PC-3 (cell line): ENCODE measurements at regions of chr9 and their contacts with region 1.

Region 1: GRCh38 chr9:127586537-127586936 is 25.5 kb upstream of the STXBP1 start:
- DNase-seq: peak; percentile 80
- ATAC-seq: peak; percentile 64
- H3K4me3 ChIP-seq: no peak overlapping the region
- H3K27ac ChIP-seq: no peak overlapping the region
- H3K4me1 ChIP-seq: peaks cover 11% of the 10 kb centered on the region
- H3K27me3 ChIP-seq: no peaks in the 10 kb centered on the region
- CTCF ChIP-seq: peak; percentile 79

Region 2: DNA sequence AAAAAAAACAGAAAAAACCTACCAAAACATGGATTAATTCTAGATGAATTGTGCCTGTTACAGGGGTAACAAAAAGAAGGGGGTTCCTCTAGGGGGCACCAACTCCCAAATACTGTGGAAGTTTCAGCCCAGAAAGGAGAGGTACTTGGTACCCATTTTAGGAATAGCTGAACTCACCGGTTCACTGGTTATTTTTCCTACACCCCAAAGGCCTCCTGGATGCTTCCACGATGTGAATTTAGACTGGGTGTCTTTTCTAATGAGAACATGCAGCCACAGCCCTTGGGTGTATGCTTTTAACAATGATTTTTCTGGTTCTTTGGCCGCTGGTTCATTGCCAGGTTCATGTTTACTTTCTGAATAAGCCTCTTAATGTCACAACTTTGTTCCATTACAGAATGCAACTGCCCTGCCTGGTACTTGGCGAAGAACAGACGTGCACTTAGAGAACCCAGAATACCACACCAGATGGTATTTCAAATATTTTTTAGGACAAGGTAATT is 275.2 kb before region 1 on chr9:
- CTCF ChIA-PET with region 1: no interaction called
- POLR2A ChIA-PET with region 1: no interaction called
- intact Hi-C with region 1: no loop called
- DNase-seq: peak; percentile 86
- ATAC-seq: peak; percentile 87
- H3K4me3 ChIP-seq: 0 out of 2 replicates have a peak overlapping the region, but pooled peaks have one; percentile 19
- H3K27ac ChIP-seq: peak overlapping the region; percentile 57
- H3K4me1 ChIP-seq: peaks cover 35% of the 10 kb centered on the region
- H3K27me3 ChIP-seq: no peaks in the 10 kb centered on the region
- CTCF ChIP-seq: peak; percentile 67

Region 3: DNA sequence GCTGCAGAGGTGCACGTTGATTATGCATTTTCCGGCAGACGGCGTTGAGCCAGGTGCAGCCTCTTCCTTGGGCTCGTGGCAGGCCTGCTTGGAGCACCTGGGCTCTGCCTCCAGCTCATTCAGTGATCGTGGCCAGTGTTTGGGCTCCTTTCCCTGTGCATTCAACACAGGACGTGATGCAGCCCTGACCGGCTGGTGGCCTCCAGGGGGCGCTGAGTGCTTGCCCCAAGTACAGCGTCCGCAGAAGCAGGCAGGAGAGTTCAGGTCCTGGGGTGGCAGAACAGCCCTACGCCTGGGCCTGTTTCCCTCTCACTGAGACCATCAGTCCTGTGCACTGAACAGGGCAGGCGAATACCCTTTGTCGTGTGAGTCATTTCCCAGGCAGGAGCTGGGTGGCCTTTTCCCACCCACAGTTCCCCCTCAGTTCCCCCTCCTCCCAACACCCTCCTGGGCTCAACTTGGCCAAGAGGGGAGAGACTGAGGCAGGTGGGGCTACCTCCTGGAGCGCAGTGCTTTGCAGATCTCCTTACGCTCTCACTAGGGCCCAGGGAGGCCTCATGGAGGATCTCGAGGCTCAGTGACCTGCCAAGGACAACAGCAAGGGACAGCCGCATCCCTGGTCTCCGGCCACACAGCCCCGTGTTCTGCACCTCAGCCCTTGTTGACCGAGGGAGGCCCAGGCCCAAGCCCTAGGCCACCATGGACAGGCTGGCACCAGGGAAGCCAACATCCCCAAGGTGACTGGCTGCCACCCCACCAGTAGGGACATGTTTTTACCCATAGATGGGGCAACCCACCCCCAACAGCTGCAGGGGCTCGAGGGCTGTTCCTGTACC is 82.4 kb before region 1 on chr9:
- CTCF ChIA-PET with region 1: no interaction called
- POLR2A ChIA-PET with region 1: no interaction called
- intact Hi-C with region 1: loop called (anchors 1 kb)
- DNase-seq: peak; percentile 66
- ATAC-seq: peak; percentile 78
- H3K4me3 ChIP-seq: no peak overlapping the region
- H3K27ac ChIP-seq: no peak overlapping the region
- H3K4me1 ChIP-seq: no peaks in the 10 kb centered on the region
- H3K27me3 ChIP-seq: no peaks in the 10 kb centered on the region
- CTCF ChIP-seq: peak; percentile 80

Region 4: GRCh38 chr9:127537792-127538191 is 48.7 kb before region 1 on chr9:
- CTCF ChIA-PET with region 1: no interaction called
- POLR2A ChIA-PET with region 1: no interaction called
- intact Hi-C with region 1: loop called (anchors 5 kb)
- DNase-seq: peak; percentile 38
- ATAC-seq: peak; percentile 67
- H3K4me3 ChIP-seq: no peak overlapping the region
- H3K27ac ChIP-seq: peak overlapping the region; percentile 79
- H3K4me1 ChIP-seq: peaks cover 49% of the 10 kb centered on the region
- H3K27me3 ChIP-seq: no peaks in the 10 kb centered on the region
- CTCF ChIP-seq: peak; percentile 55

Region 5: GRCh38 chr9:127568971-127569885 is 17.3 kb before region 1 on chr9:
- CTCF ChIA-PET with region 1: interaction called, 8 read pairs
- POLR2A ChIA-PET with region 1: no interaction called
- intact Hi-C with region 1: loop called (anchors 1 kb)
- DNase-seq: peak; percentile 87
- ATAC-seq: peak; percentile 32
- H3K4me3 ChIP-seq: peak overlapping the region; percentile 78
- H3K27ac ChIP-seq: peak overlapping the region; percentile 90
- H3K4me1 ChIP-seq: peaks cover 58% of the 10 kb centered on the region
- H3K27me3 ChIP-seq: no peaks in the 10 kb centered on the region
- CTCF ChIP-seq: no peak

Region 6: DNA sequence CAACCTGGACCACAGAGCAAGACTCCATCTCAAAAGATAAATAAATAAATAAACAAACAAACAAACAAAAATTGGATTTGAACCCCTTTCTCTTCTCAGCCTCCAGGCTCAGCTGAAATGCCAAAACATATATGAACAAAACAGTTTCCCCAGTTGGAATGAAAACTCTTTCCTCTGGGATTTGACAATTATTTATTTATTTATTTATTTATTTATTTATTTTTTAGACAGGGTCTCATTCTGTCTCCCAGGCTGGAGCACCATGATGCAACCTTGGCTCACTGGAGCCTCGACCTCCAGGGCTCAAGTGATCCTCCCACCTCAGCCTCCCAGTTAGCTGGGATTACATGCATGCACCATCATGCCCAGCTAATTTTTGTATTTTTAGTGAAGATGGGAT is 19.5 kb after region 1 on chr9:
- CTCF ChIA-PET with region 1: no interaction called
- POLR2A ChIA-PET with region 1: no interaction called
- intact Hi-C with region 1: no loop called
- DNase-seq: no peak
- ATAC-seq: no peak
- H3K4me3 ChIP-seq: no peak overlapping the region
- H3K27ac ChIP-seq: no peak overlapping the region
- H3K4me1 ChIP-seq: peaks cover 8% of the 10 kb centered on the region; the same call in 1 of the 2 replicates
- H3K27me3 ChIP-seq: no peaks in the 10 kb centered on the region
- CTCF ChIP-seq: no peak